Stomach (tissue), 19 donors: ENCODE measurements at regions of chr15 and their contacts with region 1.

Region 1: GRCh38 chr15:43285609-43286037 is 18.9 kb upstream of the TGM5 start:
- DNase-seq: peak; percentile 41 to 84
- H3K4me3 ChIP-seq: no peak overlapping the region
- H3K27ac ChIP-seq: no peak overlapping the region
- H3K4me1 ChIP-seq: peaks cover 0 to 6% (median 0%) of the 10 kb centered on the region in 4 donors
- H3K27me3 ChIP-seq: peaks cover 0 to 11% (median 0%) of the 10 kb centered on the region in 3 donors
- CTCF ChIP-seq: peak in 5 of 7 experiments; percentile 72 to 85 (median 81)
- EP300 ChIP-seq: no peak
- POLR2A ChIP-seq: no peak

Region 2: DNA sequence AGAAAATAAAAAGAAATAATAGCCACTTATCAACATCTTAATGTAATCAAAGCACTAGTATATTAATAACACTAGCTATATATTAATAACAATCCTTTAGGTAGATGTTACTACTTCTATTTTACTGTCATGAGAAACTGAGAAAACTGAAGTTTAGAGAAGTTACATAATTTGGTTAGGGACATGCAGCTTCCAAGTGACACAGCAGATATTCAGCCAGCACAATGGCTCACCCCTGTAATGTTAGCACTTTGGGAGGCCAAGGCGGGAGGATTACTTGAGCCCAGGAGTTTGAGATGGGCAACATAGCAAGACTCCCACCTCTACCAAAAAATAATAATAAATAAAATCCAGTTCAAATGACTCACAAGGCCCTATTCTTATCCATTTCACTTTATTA is 177.9 kb before region 1 on chr15:
- intact Hi-C with region 1: no loop called
- DNase-seq: no peak
- H3K4me3 ChIP-seq: no peak overlapping the region
- H3K27ac ChIP-seq: no peak overlapping the region
- H3K4me1 ChIP-seq: peaks cover 18 to 32% (median 28%) of the 10 kb centered on the region in 4 donors
- H3K27me3 ChIP-seq: no peaks in the 10 kb centered on the region
- CTCF ChIP-seq: no peak
- EP300 ChIP-seq: no peak
- POLR2A ChIP-seq: no peak

Region 3: GRCh38 chr15:43225201-43225949 is 60.2 kb before region 1 on chr15:
- intact Hi-C with region 1: loop called (anchors 5 kb)
- DNase-seq: peak in 1 of 2 donors; percentile 82
- H3K4me3 ChIP-seq: no peak overlapping the region
- H3K27ac ChIP-seq: no peak overlapping the region
- H3K4me1 ChIP-seq: no peaks in the 10 kb centered on the region
- H3K27me3 ChIP-seq: peaks cover 0 to 13% (median 0%) of the 10 kb centered on the region in 3 donors
- CTCF ChIP-seq: peak in 4 of 7 experiments; percentile 49 to 67 (median 54)
- EP300 ChIP-seq: no peak
- POLR2A ChIP-seq: no peak